ENCODE measurements at regions of chr4 and their contacts with region 1.

Region 1: DNA sequence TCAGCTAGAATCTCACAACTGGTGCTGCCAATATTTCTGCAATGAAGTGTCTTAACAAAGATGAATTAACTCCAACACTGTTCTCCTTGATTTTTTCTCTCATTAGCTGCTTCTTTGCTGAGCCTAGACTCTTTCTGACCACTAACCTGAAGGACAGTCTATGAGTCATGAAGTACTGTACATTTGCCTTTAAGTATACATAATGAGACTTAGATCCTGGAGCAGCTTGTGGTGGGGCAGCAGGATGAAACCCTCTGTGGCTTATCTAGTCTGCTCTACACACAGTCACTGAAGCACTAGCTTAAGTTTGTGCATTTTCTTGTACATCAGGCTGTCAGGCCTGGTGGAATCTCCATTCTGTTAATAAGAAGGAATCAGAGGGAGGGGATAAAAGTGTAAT is 307.4 kb upstream of the SMIM31 start:
- DNase-seq: no peak
- ATAC-seq: no peak
- H3K4me3 ChIP-seq: no peak overlapping the region
- H3K4me3 Mint-ChIP-seq: no peak overlapping the region
- H3K27ac ChIP-seq: no peak overlapping the region
- H3K27ac Mint-ChIP-seq: no peak overlapping the region
- H3K4me1 ChIP-seq: no peaks in the 10 kb centered on the region
- H3K4me1 Mint-ChIP-seq: no peaks in the 10 kb centered on the region
- H3K27me3 ChIP-seq: no peaks in the 10 kb centered on the region
- H3K27me3 Mint-ChIP-seq: no peaks in the 10 kb centered on the region
- CTCF ChIP-seq: no peak

Region 2: GRCh38 chr4:163440040-163440439 is 1006.5 kb before region 1 on chr4:
- CTCF ChIA-PET with region 1: no interaction called
- POLR2A ChIA-PET with region 1: no interaction called
- intact Hi-C with region 1: loop called in 1 of 2 experiments (anchors 5 kb)
- DNase-seq: no peak
- ATAC-seq: no peak
- H3K4me3 ChIP-seq: no peak overlapping the region
- H3K4me3 Mint-ChIP-seq: no peak overlapping the region
- H3K27ac ChIP-seq: no peak overlapping the region
- H3K27ac Mint-ChIP-seq: no peak overlapping the region
- H3K4me1 ChIP-seq: no peaks in the 10 kb centered on the region
- H3K4me1 Mint-ChIP-seq: no peaks in the 10 kb centered on the region
- H3K27me3 ChIP-seq: no peaks in the 10 kb centered on the region
- H3K27me3 Mint-ChIP-seq: peaks cover 8% of the 10 kb centered on the region
- CTCF ChIP-seq: no peak